ENCODE measurements at regions of chr10 and their contacts with region 1.

Region 1: GRCh38 chr10:44857363-44858016 is 53.6 kb upstream of the TMEM72 start:
- DNase-seq: peak; percentile 82

Region 2: DNA sequence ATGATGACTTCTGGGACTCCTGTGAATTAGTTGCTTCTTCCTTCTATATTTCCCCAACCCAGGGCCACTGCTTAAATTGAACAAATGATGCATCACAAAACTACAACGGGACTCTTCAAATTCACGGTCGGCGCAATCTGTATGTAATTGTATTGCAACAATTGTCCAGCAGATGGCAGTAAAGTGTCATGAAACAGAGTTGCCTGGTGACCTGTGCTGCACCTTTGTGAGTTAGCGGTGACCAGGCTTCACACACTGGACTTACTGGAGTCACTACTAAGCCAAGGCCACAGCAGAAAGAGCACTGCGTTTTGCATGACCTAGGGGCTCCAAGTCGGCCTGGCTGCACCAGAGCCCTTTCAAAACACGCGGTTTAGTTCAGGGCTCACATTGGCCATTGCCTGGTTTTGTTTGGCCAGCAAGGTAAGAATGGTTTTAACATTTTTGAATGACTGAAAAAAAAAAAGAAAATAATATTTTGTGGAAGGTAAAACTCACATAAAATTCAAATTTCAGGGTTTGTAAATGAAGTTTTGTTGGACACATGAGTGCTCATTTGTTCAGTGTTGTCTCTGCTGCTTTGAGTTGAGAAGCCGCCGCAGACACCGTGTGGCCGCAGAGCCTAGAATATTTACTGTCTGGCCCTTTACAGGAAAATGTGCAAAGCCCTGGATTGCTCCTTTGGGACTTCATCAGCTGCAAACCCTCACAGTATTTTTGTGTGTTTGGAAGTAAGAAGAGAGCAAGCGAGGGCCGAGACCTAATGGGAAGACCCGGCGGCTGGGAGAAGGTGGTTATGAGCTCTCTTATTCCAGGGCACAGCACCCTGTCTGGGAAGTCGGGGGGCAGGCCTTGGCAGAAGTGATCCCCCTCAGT is 1185.6 kb before region 1 on chr10:
- intact Hi-C with region 1: loop called (anchors 2 kb)
- DNase-seq: no peak

Region 3: GRCh38 chr10:44310762-44311562 is 546.5 kb before region 1 on chr10:
- intact Hi-C with region 1: loop called (anchors 5 kb)
- DNase-seq: peak; percentile 93

Region 4: GRCh38 chr10:44832595-44833390 is 24.7 kb before region 1 on chr10:
- intact Hi-C with region 1: no loop called
- DNase-seq: no peak

Measured in cardiac septum (tissue), 1 donor.